ENCODE measurements at regions of chr19 and their contacts with region 1.

Region 1: GRCh38 chr19:50333035-50333736 is 4.0 kb upstream of the KCNC3 start:
- DNase-seq: peak; percentile 93

Region 2: DNA sequence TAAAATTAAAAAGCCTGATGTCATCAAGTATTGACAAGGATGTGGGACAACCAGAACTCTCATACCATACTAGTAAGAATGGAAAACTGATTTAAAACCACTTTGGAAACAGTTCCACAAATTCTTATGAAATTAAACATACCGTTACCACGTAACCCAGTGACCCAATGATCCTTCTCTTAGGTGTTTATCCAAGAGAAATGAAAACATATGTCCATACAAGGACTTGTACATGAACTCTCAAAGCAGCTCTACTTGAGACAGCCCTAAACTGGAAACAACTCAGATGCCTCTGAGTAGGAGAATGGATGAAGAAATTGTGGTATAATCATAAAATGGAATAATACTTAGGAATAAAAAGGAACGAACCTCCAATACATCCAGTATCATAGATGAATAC is 1035.8 kb before region 1 on chr19:
- intact Hi-C with region 1: loop called in 1 of 2 experiments (anchors 5 kb)
- DNase-seq: no peak

Region 3: GRCh38 chr19:50357178-50358100 is 24.3 kb after region 1 on chr19:
- intact Hi-C with region 1: no loop called
- DNase-seq: peak; percentile 93

Measured in posterior vena cava (tissue), 2 donors.